ENCODE measurements at regions of chr7 and their contacts with region 1.

Region 1: GRCh38 chr7:107563775-107564552 is at the starts of genes COG5 and DUS4L:
- DNase-seq: peak; percentile 84
- ATAC-seq: peak; percentile 97
- total RNA-seq, gene COG5: 42.8 to 57.8 TPM
- total RNA-seq, gene DUS4L: 6.1 to 6.4 TPM

Region 2: GRCh38 chr7:107201795-107202450 is 362.0 kb before region 1 on chr7:
- intact Hi-C with region 1: loop called in 1 of 2 experiments (anchors 10 kb)
- DNase-seq: no peak
- ATAC-seq: peak; percentile 77 to 84

Region 3: DNA sequence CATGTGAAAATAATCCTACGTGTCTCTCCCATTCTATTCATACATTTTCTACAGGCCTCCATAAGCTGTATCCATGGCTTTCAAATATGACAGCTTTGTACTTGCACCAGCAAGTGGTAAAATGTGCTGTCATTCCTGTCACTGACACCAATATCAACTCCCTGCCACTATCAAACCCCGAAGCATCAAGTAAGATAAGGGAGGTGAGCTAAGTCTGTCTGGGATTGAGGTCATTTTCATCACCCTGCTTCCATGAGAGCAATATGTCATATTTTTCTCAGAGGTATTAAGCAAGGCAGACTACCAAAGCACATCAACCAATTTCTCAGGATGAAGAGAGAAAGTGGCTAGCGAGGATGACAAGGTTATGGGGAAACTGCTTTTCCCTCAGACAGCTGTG is 83.0 kb before region 1 on chr7:
- intact Hi-C with region 1: loop called in 1 of 2 experiments (anchors 5 kb)
- DNase-seq: no peak
- ATAC-seq: peak; percentile 84 to 95

Region 4: DNA sequence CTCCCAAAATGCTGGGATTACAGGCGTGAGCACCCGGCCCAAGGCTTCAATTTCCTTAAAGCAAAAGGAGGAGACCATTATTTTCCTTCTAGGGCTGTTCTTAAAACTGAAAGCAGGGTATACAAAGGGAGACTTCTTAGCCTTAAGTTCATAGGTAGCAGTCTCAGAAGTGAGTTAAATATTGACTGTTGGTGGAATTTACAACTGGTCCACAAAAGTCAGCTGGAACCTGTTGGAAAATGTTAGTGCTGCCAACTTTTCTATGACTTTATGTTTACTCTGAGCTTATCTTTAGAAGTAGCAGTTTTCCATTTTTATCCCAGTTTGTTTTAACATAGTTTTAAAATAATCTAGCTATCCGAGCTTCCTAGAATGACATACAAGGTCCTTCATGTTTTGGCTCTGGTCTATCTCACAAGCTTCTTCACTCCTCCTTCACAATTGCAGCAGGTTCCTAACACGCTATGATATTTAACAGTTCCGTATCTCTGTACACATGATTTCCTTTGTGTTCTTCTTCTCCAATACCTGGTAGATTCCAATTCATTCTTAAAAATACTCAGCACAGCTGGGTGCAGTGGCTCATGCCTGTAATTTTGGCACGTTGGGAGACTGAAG is 235.8 kb after region 1 on chr7:
- intact Hi-C with region 1: no loop called
- DNase-seq: no peak
- ATAC-seq: no peak

Measured in left cardiac atrium (tissue), 4 donors.